Breast epithelium (tissue), 4 donors: ENCODE measurements at regions of chr2 and their contacts with region 1.

Region 1: GRCh38 chr2:71558300-71559051 is 105.1 kb downstream of the DYSF start:
- DNase-seq: no peak
- H3K4me3 ChIP-seq: no peak overlapping the region
- H3K27ac ChIP-seq: no peak overlapping the region
- H3K4me1 ChIP-seq: no peaks in the 10 kb centered on the region
- H3K27me3 ChIP-seq: no peaks in the 10 kb centered on the region
- CTCF ChIP-seq: no peak
- POLR2A ChIP-seq: no peak

Region 2: DNA sequence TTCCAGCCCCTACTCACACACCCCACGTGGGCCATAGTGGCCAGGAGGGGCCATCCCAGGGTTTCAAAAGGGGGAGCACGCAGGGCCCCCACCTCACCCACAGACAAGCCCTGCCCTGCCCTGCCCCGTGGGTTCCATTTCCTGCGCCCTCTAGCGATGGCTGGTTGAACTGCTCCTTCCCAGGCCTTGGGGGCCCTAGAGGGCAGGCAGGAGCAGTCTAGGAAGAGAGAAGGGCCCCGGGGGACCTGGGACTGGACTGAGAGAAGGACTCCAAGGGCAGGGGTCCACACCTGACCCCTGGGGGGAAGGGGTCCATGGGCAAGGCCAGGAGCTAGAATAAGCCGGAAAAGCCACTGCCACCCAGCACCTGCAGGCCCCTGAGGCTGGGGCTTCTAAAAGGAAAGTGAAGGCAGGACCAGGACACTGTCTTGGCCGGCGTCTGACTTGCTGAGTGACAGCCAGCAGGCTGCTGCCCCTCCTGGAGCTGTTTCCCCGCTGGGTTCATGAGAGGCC is 579.1 kb after region 1 on chr2:
- intact Hi-C with region 1: loop called (anchors 10 kb)
- DNase-seq: peak in 1 of 2 donors; percentile 61
- H3K4me3 ChIP-seq: peak overlapping the region in 1 of 3 donors; percentile 7
- H3K27ac ChIP-seq: no peak overlapping the region
- H3K4me1 ChIP-seq: peaks cover 0 to under 1% of the 10 kb centered on the region in 2 donors
- H3K27me3 ChIP-seq: no peaks in the 10 kb centered on the region
- CTCF ChIP-seq: peak; percentile 57 to 63 (median 61)
- POLR2A ChIP-seq: no peak